ENCODE measurements at regions of chr12 and their contacts with region 1.

Region 1: DNA sequence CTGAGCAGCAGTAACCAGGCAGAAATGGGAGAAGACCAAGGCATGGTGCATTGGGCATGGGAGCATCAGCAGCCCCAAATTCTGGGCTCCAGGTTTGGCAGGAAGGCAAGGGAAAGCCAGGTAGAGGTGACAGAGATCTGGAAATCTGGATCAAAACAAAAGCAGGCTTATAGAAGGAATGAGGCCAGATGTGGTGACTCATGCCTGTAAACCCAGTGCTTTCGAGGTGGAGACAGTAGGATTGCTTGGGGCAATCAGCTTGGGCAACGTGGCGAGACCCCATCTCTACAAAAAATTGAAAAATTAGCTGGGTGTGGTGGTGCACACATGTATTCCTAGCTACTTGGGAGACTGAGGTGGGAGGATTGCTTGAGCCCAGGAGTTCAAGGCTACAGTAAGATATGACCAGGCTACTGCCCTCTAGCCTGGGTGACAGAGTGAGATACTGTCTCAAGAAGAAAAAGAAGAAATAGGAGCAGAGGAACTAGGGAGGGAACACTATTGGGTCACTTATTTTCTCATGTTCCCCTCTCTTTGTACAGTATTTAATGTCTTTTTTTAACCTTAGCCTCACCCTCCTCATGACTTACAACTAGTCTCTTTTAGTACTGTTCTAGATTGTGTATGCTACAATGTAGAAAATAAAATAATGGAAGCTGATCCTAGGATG is 25.1 kb downstream of the SLC4A8 start:
- DNase-seq: peak; percentile 5 to 38
- H3K4me3 ChIP-seq: no peak overlapping the region
- H3K27ac ChIP-seq: no peak overlapping the region
- H3K4me1 ChIP-seq: no peaks in the 10 kb centered on the region
- H3K27me3 ChIP-seq: no peaks in the 10 kb centered on the region
- CTCF ChIP-seq: no peak

Region 2: GRCh38 chr12:51262758-51263177 is 186.9 kb before region 1 on chr12:
- CTCF ChIA-PET with region 1: no interaction called
- POLR2A ChIA-PET with region 1: no interaction called
- intact Hi-C with region 1: no loop called
- DNase-seq: peak in 1 of 2 experiments; percentile 41
- H3K4me3 ChIP-seq: no peak overlapping the region
- H3K27ac ChIP-seq: no peak overlapping the region
- H3K4me1 ChIP-seq: peaks cover 13% of the 10 kb centered on the region; the same call in 1 of the 2 replicates
- H3K27me3 ChIP-seq: no peaks in the 10 kb centered on the region
- CTCF ChIP-seq: peak; percentile 45

Region 3: GRCh38 chr12:51377099-51377984 is 72.4 kb before region 1 on chr12:
- CTCF ChIA-PET with region 1: no interaction called
- POLR2A ChIA-PET with region 1: no interaction called
- intact Hi-C with region 1: no loop called
- DNase-seq: no peak
- H3K4me3 ChIP-seq: no peak overlapping the region
- H3K27ac ChIP-seq: no peak overlapping the region
- H3K4me1 ChIP-seq: peaks cover 12% of the 10 kb centered on the region
- H3K27me3 ChIP-seq: no peaks in the 10 kb centered on the region
- CTCF ChIP-seq: no peak

Region 4: DNA sequence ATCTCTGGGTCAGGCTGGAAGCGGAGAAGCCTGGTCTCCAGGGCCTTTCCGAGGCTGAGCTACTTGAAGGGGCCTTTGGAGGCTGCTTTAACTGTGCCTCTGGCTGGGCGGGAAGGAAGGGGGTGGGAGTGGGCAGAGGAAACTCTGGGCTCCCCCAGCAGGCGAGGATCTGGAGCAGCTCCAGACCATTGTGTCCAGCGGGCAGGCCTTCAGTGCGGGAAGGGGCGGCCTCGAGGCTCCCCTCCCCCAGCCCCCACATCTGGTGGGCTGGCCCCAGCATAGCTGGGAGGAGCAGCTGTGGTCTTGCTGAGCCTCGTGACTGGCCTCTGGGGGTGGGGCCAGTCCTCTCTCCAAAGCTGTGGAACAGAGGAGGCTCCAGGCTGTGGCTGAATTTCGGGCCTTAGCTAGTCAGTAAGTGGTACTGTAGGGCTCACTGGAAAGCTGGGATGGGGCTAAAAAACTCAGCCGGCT is 560.5 kb after region 1 on chr12:
- CTCF ChIA-PET with region 1: interaction called, 14 read pairs
- POLR2A ChIA-PET with region 1: no interaction called
- intact Hi-C with region 1: no loop called
- DNase-seq: no peak
- H3K4me3 ChIP-seq: no peak overlapping the region
- H3K27ac ChIP-seq: no peak overlapping the region
- H3K4me1 ChIP-seq: no peaks in the 10 kb centered on the region
- H3K27me3 ChIP-seq: no peaks in the 10 kb centered on the region
- CTCF ChIP-seq: no peak

Measured in PC-9 (cell line).